AG04449 (cell line): ENCODE measurements at regions of chr1 and their contacts with region 1.

Region 1: DNA sequence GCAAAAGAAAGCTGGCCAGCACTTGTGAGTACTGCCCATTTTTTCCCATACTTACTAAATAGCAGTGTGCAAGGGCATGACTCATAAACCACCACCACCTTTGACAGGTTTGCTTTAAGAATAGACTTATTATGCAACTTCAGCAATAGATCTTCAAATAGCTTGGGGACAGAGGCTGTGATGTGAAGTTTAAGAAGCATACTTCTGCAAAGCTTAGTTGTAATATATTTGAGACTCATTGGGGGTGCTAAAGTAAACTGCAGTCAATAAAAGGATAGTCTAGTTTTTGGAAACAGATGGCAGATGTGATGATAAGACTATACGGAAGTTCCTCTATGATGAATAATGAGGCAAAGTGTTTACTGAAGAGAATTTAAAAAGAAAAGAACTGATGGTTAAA is 210.0 kb downstream of the PLA2G4A start:
- DNase-seq: no peak
- H3K4me3 ChIP-seq: no peak overlapping the region
- CTCF ChIP-seq: no peak

Region 2: GRCh38 chr1:187051618-187052232 is 12.9 kb after region 1 on chr1:
- CTCF ChIA-PET with region 1: interaction called, 43 read pairs
- POLR2A ChIA-PET with region 1: no interaction called
- DNase-seq: no peak
- H3K4me3 ChIP-seq: no peak overlapping the region
- CTCF ChIP-seq: peak; percentile 30